ENCODE measurements at regions of chr10 and their contacts with region 1.

Region 1: DNA sequence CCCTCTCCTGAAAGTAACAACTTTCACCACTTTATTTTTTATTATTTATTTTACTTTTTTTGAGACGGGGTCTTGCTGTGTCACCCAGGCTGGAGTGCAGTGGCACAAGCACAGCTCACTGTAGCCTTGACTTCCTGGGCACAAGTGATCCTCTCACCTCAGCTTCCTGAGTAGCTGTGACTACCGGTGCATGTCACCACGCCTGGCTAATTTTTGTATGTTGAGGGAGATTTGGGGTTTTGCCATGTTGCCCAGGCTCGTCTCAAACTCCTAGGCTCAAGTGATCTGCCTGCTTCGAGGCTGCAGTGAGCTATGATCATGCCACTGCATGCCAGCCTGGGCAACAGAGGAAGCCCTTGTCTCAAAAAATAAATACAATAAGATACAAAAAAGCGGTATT is 14.9 kb upstream of the SLIT1 start:
- DNase-seq: no peak
- ATAC-seq: no peak

Region 2: GRCh38 chr10:97069576-97070362 is 130.8 kb before region 1 on chr10:
- intact Hi-C with region 1: loop called (anchors 10 kb)
- DNase-seq: no peak
- ATAC-seq: no peak